ENCODE measurements at regions of chr1 and their contacts with region 1.

Region 1: GRCh38 chr1:205977402-205978014 is 25.7 kb downstream of the RAB7B start:
- DNase-seq: peak in 2 of 3 donors; percentile 65 to 77
- ATAC-seq: peak; percentile 83
- H3K4me3 ChIP-seq: no peak overlapping the region
- H3K4me1 ChIP-seq: no peaks in the 10 kb centered on the region
- CTCF ChIP-seq: peak; percentile 81

Region 2: GRCh38 chr1:205919026-205919746 is 58.3 kb before region 1 on chr1:
- intact Hi-C with region 1: loop called (anchors 2 to 5 kb)
- DNase-seq: peak in 2 of 3 donors; percentile 75 to 87
- ATAC-seq: peak; percentile 79
- H3K4me3 ChIP-seq: no peak overlapping the region
- H3K4me1 ChIP-seq: no peaks in the 10 kb centered on the region
- CTCF ChIP-seq: peak; percentile 82

Measured in mucosa of descending colon (tissue), 3 donors.